ENCODE measurements at regions of chr15 and their contacts with region 1.

Region 1: DNA sequence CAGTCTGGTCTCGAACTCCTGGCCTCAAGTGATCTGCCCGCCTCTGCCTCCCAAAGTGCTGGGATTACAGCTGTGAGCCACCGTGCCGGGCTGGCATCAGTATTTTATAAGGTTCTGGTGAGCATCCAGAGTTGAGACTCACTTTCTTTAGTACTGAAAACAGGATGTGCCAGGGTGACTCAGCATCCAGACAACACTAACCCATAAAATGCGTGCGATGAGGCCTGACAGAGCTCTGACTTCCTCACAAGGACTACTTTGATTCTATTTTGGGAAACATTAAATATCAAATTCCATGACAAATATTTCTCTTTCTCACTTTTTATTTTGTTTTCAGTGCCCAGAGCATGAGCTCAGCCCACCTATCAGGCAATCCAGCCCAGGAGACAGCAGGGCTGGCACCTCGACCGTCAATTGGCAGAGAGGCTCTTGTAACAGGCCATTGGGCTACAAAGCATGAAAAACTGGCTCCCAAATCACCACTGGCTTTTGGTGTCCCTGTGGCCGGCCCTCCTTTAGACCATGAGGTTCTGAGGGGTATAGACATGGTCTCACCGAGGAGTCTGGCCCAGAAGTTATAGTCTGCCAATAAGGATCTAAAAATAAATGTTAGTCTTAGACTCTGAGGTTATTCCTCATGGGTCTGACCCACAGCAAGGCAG is 75.0 kb downstream of the FEM1B start:
- DNase-seq: peak; percentile 98
- ATAC-seq: peak; percentile 75
- H3K4me3 ChIP-seq: no peak overlapping the region
- H3K27ac ChIP-seq: peak overlapping the region; percentile 59
- H3K4me1 ChIP-seq: peaks cover 20% of the 10 kb centered on the region
- H3K27me3 ChIP-seq: no peaks in the 10 kb centered on the region
- CTCF ChIP-seq: no peak
- POLR2A ChIP-seq: no peak
- RAD21 ChIP-seq: no peak

Region 2: GRCh38 chr15:68383161-68384074 is 30.9 kb after region 1 on chr15:
- CTCF ChIA-PET with region 1: interaction called, 4 read pairs
- POLR2A ChIA-PET with region 1: no interaction called
- dilution Hi-C with region 1: no loop called
- in situ Hi-C with region 1: no loop called
- intact Hi-C with region 1: loop called (anchors 1 kb)
- DNase-seq: peak; percentile 31
- ATAC-seq: no peak
- H3K4me3 ChIP-seq: no peak overlapping the region
- H3K27ac ChIP-seq: peak overlapping the region; percentile 86
- H3K4me1 ChIP-seq: peaks cover 47% of the 10 kb centered on the region
- H3K27me3 ChIP-seq: no peaks in the 10 kb centered on the region
- CTCF ChIP-seq: peak; percentile 66
- POLR2A ChIP-seq: no peak
- RAD21 ChIP-seq: peak; percentile 56

Region 3: GRCh38 chr15:68598171-68599152 is 245.9 kb after region 1 on chr15:
- CTCF ChIA-PET with region 1: no interaction called
- POLR2A ChIA-PET with region 1: no interaction called
- dilution Hi-C with region 1: no loop called
- in situ Hi-C with region 1: no loop called
- intact Hi-C with region 1: no loop called
- DNase-seq: no peak
- ATAC-seq: peak; percentile 33; the same call in 1 of the 2 replicates
- H3K4me3 ChIP-seq: no peak overlapping the region
- H3K27ac ChIP-seq: no peak overlapping the region
- H3K4me1 ChIP-seq: peaks cover 24% of the 10 kb centered on the region
- H3K27me3 ChIP-seq: no peaks in the 10 kb centered on the region
- CTCF ChIP-seq: no peak
- POLR2A ChIP-seq: no peak
- RAD21 ChIP-seq: no peak